ENCODE measurements at regions of chr13 and their contacts with region 1.

Region 1: DNA sequence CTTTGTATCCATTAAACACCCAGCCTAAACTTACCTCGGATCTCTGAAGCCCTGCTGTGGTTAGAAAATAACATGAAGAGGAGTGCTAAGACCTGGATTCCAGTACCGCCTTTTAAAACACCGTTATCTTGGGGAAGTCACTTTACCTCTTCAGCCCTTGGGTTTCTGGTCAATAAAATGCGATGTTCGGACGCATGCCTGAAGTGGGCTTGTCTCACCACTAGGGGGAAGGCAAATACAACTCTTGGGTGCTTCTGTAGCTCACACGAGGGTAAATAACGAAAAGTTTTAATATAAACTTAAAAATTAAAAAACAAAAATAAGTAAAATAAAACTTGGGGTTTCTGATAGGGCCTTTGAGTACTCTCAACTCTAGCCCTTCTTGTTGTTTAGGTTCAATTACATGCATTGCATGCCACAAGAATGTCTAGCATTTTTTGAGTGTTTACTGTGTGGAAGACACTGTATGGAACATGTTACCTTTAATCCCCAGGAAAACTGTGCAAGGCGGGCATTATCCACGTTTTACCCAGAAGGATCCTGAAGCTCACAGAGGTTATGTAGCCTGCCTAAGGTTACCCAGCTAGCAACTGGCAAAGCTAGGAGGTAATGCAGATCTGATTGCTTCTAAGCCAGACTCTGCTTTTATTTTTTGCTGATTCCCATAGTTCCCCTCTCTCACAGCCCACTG is 240.4 kb downstream of the LMO7 start:
- DNase-seq: peak; percentile 61
- ATAC-seq: peak; percentile 66
- H3K4me3 ChIP-seq: no peak overlapping the region
- H3K4me3 Mint-ChIP-seq: no peak overlapping the region
- H3K27ac ChIP-seq: no peak overlapping the region
- H3K27ac Mint-ChIP-seq: no peak overlapping the region
- H3K4me1 ChIP-seq: peaks cover 0 to 3% of the 10 kb centered on the region in 2 donors
- H3K4me1 Mint-ChIP-seq: peaks cover 4% of the 10 kb centered on the region
- H3K27me3 ChIP-seq: peaks cover 0 to 5% (median 3%) of the 10 kb centered on the region in 4 experiments
- H3K27me3 Mint-ChIP-seq: peaks cover 32% of the 10 kb centered on the region
- CTCF ChIP-seq: peak; percentile 90

Region 2: DNA sequence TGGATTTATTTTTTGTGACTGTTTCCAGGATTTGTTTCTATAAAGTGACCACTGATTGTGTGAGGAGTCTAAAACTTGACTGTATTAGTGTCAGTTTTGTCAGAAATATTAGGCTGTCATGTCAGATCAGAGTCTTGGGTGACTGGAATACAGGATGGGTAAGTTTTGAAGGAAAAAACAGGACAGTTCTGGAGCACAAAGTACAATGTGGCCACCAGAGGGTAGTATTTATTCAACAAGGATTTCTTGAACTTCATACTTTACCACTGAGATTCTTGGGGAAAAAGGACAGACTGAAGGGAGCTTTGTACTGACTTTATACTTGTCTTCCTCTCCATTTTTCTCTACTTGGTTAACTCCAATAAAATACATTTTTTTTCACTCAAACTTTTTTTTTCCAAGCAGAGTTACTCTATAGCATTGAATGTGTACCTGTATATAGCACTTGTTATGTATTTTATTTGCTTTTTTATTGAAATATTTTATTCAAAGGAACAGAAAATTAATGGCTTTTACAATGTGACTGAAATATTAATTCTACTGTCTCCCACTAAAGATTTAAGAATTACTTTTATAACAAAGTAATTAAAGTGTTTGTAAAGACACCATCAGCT is 189.2 kb before region 1 on chr13:
- CTCF ChIA-PET with region 1: interaction called, 3 read pairs
- POLR2A ChIA-PET with region 1: no interaction called
- intact Hi-C with region 1: loop called (anchors 10 kb)
- DNase-seq: no peak
- ATAC-seq: no peak
- H3K4me3 ChIP-seq: no peak overlapping the region
- H3K4me3 Mint-ChIP-seq: no peak overlapping the region
- H3K27ac ChIP-seq: no peak overlapping the region
- H3K27ac Mint-ChIP-seq: no peak overlapping the region
- H3K4me1 ChIP-seq: no peaks in the 10 kb centered on the region
- H3K4me1 Mint-ChIP-seq: no peaks in the 10 kb centered on the region
- H3K27me3 ChIP-seq: no peaks in the 10 kb centered on the region
- H3K27me3 Mint-ChIP-seq: no peaks in the 10 kb centered on the region
- CTCF ChIP-seq: no peak

Region 3: GRCh38 chr13:75864718-75865117 is 11.8 kb before region 1 on chr13:
- CTCF ChIA-PET with region 1: interaction called, 12 read pairs
- POLR2A ChIA-PET with region 1: no interaction called
- intact Hi-C with region 1: no loop called
- DNase-seq: no peak
- ATAC-seq: no peak
- H3K4me3 ChIP-seq: no peak overlapping the region
- H3K4me3 Mint-ChIP-seq: no peak overlapping the region
- H3K27ac ChIP-seq: no peak overlapping the region
- H3K27ac Mint-ChIP-seq: no peak overlapping the region
- H3K4me1 ChIP-seq: no peaks in the 10 kb centered on the region
- H3K4me1 Mint-ChIP-seq: no peaks in the 10 kb centered on the region
- H3K27me3 ChIP-seq: peaks cover 0 to 4% (median 0%) of the 10 kb centered on the region in 4 experiments
- H3K27me3 Mint-ChIP-seq: peaks cover 6% of the 10 kb centered on the region
- CTCF ChIP-seq: no peak

Region 4: DNA sequence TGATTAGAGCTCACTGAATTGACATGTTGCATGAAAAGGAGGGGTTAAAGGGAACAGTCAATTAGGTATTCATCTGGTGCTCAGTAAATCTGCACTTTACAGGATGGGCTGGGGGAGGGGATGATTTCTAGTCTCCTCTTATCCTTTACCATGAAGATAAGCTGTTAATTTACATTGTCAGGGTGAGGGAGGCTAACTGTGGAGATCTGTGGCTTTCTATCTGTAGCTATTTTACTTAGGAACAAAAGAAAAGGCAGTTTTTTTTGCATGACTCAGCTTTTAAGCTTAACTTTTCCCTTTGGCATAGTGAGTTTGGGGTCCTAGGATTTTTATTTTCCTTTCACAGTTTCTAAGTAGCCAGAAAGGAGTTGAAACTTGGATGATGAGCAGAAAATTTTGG is 12.9 kb after region 1 on chr13:
- CTCF ChIA-PET with region 1: interaction called, 50 read pairs
- POLR2A ChIA-PET with region 1: no interaction called
- intact Hi-C with region 1: no loop called
- DNase-seq: no peak
- ATAC-seq: no peak
- H3K4me3 ChIP-seq: no peak overlapping the region
- H3K4me3 Mint-ChIP-seq: no peak overlapping the region
- H3K27ac ChIP-seq: no peak overlapping the region
- H3K27ac Mint-ChIP-seq: no peak overlapping the region
- H3K4me1 ChIP-seq: no peaks in the 10 kb centered on the region
- H3K4me1 Mint-ChIP-seq: no peaks in the 10 kb centered on the region
- H3K27me3 ChIP-seq: no peaks in the 10 kb centered on the region
- H3K27me3 Mint-ChIP-seq: peaks cover 10% of the 10 kb centered on the region
- CTCF ChIP-seq: no peak

Region 5: DNA sequence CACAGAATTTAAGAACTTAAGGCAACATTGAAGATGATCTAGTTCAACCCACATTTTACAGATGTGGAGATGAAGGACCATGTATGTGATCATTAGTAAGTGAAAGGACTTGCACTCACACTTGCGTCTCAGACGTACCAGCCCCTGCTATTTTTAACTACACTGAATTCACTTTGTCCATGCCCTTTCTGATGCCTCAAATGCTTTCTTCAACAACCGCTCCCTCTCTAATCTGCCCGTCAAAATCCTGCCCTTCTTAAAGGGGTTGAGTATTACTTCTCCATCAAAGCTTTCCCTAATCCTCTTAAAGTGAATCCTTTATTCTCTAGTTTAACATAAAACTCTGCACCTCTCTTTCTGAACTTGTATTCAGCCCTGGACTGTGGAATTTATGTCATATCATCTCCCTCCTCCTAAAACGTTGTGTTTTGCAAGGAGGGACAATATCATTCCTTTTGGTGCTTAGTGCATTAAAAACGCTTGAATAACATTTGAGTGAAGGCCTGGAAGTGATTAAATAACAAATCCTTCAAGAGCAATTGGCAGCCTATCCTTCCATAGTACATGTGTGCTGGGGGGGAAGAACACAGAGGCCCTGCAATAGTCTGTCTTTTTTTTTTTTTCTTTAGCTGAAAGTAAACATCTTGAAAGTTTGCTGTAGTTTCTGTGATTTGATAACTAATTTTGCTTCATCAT is 252.9 kb after region 1 on chr13:
- CTCF ChIA-PET with region 1: no interaction called
- POLR2A ChIA-PET with region 1: no interaction called
- intact Hi-C with region 1: no loop called
- DNase-seq: no peak
- ATAC-seq: no peak
- H3K4me3 ChIP-seq: no peak overlapping the region
- H3K4me3 Mint-ChIP-seq: no peak overlapping the region
- H3K27ac ChIP-seq: no peak overlapping the region
- H3K27ac Mint-ChIP-seq: no peak overlapping the region
- H3K4me1 ChIP-seq: no peaks in the 10 kb centered on the region
- H3K4me1 Mint-ChIP-seq: no peaks in the 10 kb centered on the region
- H3K27me3 ChIP-seq: no peaks in the 10 kb centered on the region
- H3K27me3 Mint-ChIP-seq: no peaks in the 10 kb centered on the region
- CTCF ChIP-seq: no peak

Region 6: DNA sequence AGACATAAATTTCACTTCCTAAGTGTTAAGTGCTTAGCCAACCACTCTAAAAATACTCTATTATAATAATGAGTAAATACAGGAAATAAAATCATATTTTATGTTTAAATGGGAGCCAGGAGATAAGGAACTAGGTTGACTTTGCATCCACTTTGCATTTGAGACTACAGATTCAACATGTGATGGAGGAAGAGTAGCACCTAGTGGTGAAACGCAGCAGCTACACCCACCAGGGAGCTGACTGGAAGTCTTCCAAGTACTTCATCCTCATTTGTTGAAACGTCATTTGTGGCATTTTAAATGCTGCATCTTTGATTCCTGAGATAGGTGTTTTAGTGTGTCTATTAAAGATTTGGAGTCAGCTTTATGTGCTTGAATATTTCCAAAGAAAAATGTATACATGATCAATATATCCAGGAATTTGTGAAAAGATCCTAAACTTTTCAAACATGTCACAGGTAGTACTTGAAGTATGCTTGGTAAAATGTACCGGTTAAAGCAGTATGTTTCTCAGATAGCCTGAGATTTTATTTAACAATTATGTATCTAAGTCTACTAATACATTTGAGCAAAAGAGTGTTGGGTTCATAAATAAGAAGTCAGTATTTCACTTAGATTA is 1027.1 kb after region 1 on chr13:
- CTCF ChIA-PET with region 1: interaction called, 292 read pairs
- POLR2A ChIA-PET with region 1: no interaction called
- intact Hi-C with region 1: loop called (anchors 1 kb)
- DNase-seq: peak; percentile 76
- ATAC-seq: peak; percentile 85
- H3K4me3 ChIP-seq: no peak overlapping the region
- H3K4me3 Mint-ChIP-seq: no peak overlapping the region
- H3K27ac ChIP-seq: no peak overlapping the region
- H3K27ac Mint-ChIP-seq: no peak overlapping the region
- H3K4me1 ChIP-seq: no peaks in the 10 kb centered on the region
- H3K4me1 Mint-ChIP-seq: no peaks in the 10 kb centered on the region
- H3K27me3 ChIP-seq: peaks cover 0 to 9% (median 0%) of the 10 kb centered on the region in 4 experiments
- H3K27me3 Mint-ChIP-seq: peaks cover 24% of the 10 kb centered on the region
- CTCF ChIP-seq: peak; percentile 100

Region 7: DNA sequence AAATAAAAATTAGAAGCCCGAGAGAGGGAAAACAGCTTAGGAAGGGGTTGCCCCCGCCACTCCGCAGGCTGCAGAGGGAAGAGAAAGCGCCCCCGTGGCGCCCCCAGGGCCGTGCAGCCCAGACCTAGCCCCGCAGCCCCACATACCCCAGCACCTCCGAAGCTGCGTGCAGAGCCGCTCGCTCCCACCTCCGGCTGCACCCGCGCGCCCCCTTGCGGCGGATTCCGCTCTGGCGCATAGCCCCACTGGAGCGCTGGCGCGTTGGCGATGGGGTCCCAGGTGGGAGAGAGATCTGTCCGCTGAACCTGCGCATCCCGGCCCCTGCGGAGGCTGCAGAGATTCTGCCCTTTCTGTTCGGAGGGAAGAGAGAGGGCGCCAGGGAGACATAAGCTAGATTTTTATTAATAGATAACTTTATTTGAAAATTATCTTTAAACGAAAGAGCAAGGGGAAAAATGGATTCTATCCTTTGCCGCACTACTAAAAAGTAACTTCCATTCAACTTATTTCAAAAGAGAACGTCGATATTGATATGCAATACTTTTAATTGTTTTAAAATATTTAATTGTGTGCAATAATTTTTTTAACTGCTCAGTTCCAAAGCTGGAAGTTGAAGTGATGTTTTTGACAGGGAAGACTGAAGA is 1103.7 kb after region 1 on chr13:
- CTCF ChIA-PET with region 1: interaction called, 20 read pairs
- POLR2A ChIA-PET with region 1: no interaction called
- intact Hi-C with region 1: no loop called
- DNase-seq: peak; percentile 82
- ATAC-seq: peak; percentile 100
- H3K4me3 ChIP-seq: peak overlapping the region in 3 of 5 experiments; percentile 13 to 24 (median 15)
- H3K4me3 Mint-ChIP-seq: peak overlapping the region; percentile 64
- H3K27ac ChIP-seq: no peak overlapping the region
- H3K27ac Mint-ChIP-seq: no peak overlapping the region
- H3K4me1 ChIP-seq: peaks cover 0 to 7% of the 10 kb centered on the region in 2 donors
- H3K4me1 Mint-ChIP-seq: peaks cover 4% of the 10 kb centered on the region
- H3K27me3 ChIP-seq: peaks cover 0 to 28% (median 14%) of the 10 kb centered on the region in 4 experiments
- H3K27me3 Mint-ChIP-seq: peaks cover 44% of the 10 kb centered on the region
- CTCF ChIP-seq: peak; percentile 99

Measured in B cell (primary cell).